ENCODE measurements at regions of chr1 and their contacts with region 1.

Region 1: GRCh38 chr1:101288491-101288944 is 51.7 kb downstream of the S1PR1 start:
- DNase-seq: peak; percentile 87
- H3K4me3 Mint-ChIP-seq: no peak overlapping the region
- H3K27ac Mint-ChIP-seq: no peak overlapping the region
- H3K4me1 Mint-ChIP-seq: peaks cover 13% of the 10 kb centered on the region
- H3K27me3 Mint-ChIP-seq: no peaks in the 10 kb centered on the region
- CTCF ChIP-seq: peak; percentile 85

Region 2: GRCh38 chr1:100883963-100884362 is 404.6 kb before region 1 on chr1:
- CTCF ChIA-PET with region 1: interaction called, 4 read pairs
- POLR2A ChIA-PET with region 1: interaction called, 3 read pairs
- intact Hi-C with region 1: loop called (anchors 1 kb)
- DNase-seq: peak; percentile 68
- H3K4me3 Mint-ChIP-seq: no peak overlapping the region
- H3K27ac Mint-ChIP-seq: peak overlapping the region; percentile 21
- H3K4me1 Mint-ChIP-seq: peaks cover 19% of the 10 kb centered on the region
- H3K27me3 Mint-ChIP-seq: no peaks in the 10 kb centered on the region
- CTCF ChIP-seq: peak; percentile 15

Region 3: DNA sequence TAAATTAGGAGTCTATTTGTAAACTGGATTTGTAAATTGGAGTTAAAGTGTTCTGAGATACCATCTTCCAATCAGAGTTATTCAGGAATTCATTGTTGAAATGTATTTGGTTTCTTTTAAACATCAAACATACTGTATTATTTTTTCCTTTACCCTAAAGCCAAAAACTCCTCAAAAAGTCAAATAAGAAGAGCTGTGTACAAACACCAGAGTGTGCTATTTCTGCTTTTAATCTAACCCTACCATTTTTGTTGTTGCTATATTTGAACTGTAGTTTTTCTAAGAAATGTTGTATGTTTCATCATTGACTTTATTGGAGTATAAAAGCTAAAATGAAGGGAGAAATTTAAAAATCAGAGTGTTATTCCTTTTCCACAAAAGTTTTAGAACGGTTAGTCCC is 356.8 kb before region 1 on chr1:
- CTCF ChIA-PET with region 1: interaction called, 167 read pairs
- POLR2A ChIA-PET with region 1: interaction called, 3 read pairs
- intact Hi-C with region 1: no loop called
- DNase-seq: no peak
- H3K4me3 Mint-ChIP-seq: no peak overlapping the region
- H3K27ac Mint-ChIP-seq: no peak overlapping the region
- H3K4me1 Mint-ChIP-seq: no peaks in the 10 kb centered on the region
- H3K27me3 Mint-ChIP-seq: no peaks in the 10 kb centered on the region
- CTCF ChIP-seq: no peak

Region 4: DNA sequence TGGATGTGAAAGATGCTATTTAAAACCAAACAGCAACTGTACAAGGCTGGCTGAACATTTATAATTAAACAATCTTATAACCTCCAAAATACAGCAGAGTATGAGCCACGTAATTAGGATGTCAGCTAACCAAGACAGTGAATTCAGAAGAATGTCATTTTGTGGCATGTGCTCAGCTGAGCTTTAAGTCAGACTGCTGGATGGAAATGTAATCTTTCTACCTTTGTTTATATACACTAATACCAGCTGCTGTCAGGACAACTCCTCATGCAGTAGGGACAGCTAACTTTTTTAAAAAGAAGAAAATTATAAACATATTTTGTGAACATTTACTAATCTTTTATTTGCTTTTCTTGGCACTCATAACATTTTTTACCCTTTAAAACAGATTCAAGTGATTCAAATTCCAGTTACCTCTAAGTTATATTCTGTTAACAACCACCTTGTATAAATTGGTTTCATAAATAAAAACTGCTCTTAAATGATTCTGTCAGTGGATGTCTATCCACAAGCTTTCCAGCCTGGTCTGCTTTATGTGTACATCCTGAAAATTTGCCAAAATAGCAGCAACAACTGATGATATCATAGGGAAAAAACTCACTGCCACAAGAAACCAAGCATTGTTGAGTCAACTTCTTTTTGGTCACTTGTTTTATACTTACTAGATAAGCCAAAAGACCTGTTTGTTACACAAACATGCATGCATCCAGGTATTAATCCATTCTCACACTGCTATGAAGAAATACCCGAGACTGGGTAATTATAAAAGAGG is 299.0 kb before region 1 on chr1:
- CTCF ChIA-PET with region 1: interaction called, 10 read pairs
- POLR2A ChIA-PET with region 1: no interaction called
- intact Hi-C with region 1: no loop called
- DNase-seq: peak; percentile 45
- H3K4me3 Mint-ChIP-seq: no peak overlapping the region
- H3K27ac Mint-ChIP-seq: peak overlapping the region; percentile 51
- H3K4me1 Mint-ChIP-seq: peaks cover 10% of the 10 kb centered on the region
- H3K27me3 Mint-ChIP-seq: no peaks in the 10 kb centered on the region
- CTCF ChIP-seq: no peak

Region 5: GRCh38 chr1:101181930-101182329 is 106.6 kb before region 1 on chr1:
- CTCF ChIA-PET with region 1: no interaction called
- POLR2A ChIA-PET with region 1: no interaction called
- intact Hi-C with region 1: no loop called
- DNase-seq: no peak
- H3K4me3 Mint-ChIP-seq: no peak overlapping the region
- H3K27ac Mint-ChIP-seq: no peak overlapping the region
- H3K4me1 Mint-ChIP-seq: no peaks in the 10 kb centered on the region
- H3K27me3 Mint-ChIP-seq: no peaks in the 10 kb centered on the region
- CTCF ChIP-seq: no peak

Region 6: GRCh38 chr1:101203820-101204540 is 84.5 kb before region 1 on chr1:
- CTCF ChIA-PET with region 1: no interaction called
- POLR2A ChIA-PET with region 1: no interaction called
- intact Hi-C with region 1: no loop called
- DNase-seq: no peak
- H3K4me3 Mint-ChIP-seq: no peak overlapping the region
- H3K27ac Mint-ChIP-seq: no peak overlapping the region
- H3K4me1 Mint-ChIP-seq: peaks cover 6% of the 10 kb centered on the region
- H3K27me3 Mint-ChIP-seq: no peaks in the 10 kb centered on the region
- CTCF ChIP-seq: no peak

Region 7: GRCh38 chr1:101238681-101239094 is 49.8 kb before region 1 on chr1:
- CTCF ChIA-PET with region 1: interaction called, 62 read pairs
- POLR2A ChIA-PET with region 1: interaction called, 6 read pairs
- intact Hi-C with region 1: loop called (anchors 1 kb)
- DNase-seq: peak; percentile 93
- H3K4me3 Mint-ChIP-seq: peak overlapping the region; percentile 52
- H3K27ac Mint-ChIP-seq: no peak overlapping the region
- H3K4me1 Mint-ChIP-seq: peaks cover 32% of the 10 kb centered on the region
- H3K27me3 Mint-ChIP-seq: no peaks in the 10 kb centered on the region
- CTCF ChIP-seq: peak; percentile 89

Region 8: DNA sequence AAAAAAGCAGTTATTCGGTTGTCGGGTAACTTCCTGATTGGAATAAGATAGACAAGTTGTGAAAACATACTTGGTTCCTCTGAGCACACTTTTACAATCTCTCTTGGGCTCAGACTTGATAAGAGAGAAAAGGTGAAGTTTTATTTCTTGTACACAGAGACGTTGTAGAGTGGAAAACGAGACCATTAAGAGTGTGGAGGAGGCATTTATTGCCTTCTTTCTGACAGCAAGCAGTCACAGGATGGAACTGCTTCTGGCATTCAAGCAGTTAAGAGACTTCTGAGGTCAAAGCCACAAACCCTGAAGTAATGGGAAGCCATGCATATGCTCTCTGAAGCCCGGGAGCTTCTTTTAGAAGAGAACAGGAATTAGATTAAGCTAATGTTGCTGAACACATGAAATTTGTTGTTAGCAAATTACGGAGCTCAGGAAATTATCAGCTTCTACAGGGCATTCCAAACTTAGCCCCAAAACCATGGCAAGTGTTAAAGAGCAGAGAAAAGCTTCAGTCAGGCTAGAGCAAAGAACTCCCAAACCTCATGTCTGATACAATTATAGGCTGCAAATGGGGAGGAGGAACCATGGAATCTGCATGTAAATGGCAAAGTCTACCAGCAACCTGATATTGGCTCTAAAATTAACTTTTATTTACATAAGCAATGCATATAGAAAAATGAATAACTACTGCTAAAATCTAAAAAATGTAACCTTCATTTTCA is 25.7 kb before region 1 on chr1:
- CTCF ChIA-PET with region 1: interaction called, 88 read pairs
- POLR2A ChIA-PET with region 1: interaction called, 4 read pairs
- intact Hi-C with region 1: no loop called
- DNase-seq: no peak
- H3K4me3 Mint-ChIP-seq: no peak overlapping the region
- H3K27ac Mint-ChIP-seq: no peak overlapping the region
- H3K4me1 Mint-ChIP-seq: peaks cover 39% of the 10 kb centered on the region
- H3K27me3 Mint-ChIP-seq: no peaks in the 10 kb centered on the region
- CTCF ChIP-seq: no peak